ENCODE measurements at regions of chr3 and their contacts with region 1.

Region 1: GRCh38 chr3:10322352-10322710 is 1.4 kb upstream of the SEC13 start:
- DNase-seq: peak; percentile 29
- H3K4me3 Mint-ChIP-seq: no peak overlapping the region
- H3K27ac Mint-ChIP-seq: no peak overlapping the region
- H3K4me1 Mint-ChIP-seq: peaks cover 23% of the 10 kb centered on the region
- H3K27me3 Mint-ChIP-seq: peaks cover 1% of the 10 kb centered on the region

Region 2: GRCh38 chr3:9749645-9750555 is 572.4 kb before region 1 on chr3 and contains the start of gene OGG1:
- CTCF ChIA-PET with region 1: interaction called, 3 read pairs
- intact Hi-C with region 1: loop called (anchors 1 kb)
- DNase-seq: peak; percentile 98
- H3K4me3 Mint-ChIP-seq: peak within 1 kb of the TSS; percentile 97
- H3K27ac Mint-ChIP-seq: peak within 1 kb of the TSS; percentile 94
- H3K4me1 Mint-ChIP-seq: peaks cover 50% of the 10 kb centered on the region
- H3K27me3 Mint-ChIP-seq: no peaks in the 10 kb centered on the region
- total RNA-seq, gene OGG1: 26.1 to 28.5 TPM

Region 3: GRCh38 chr3:9843715-9844438 is 478.5 kb before region 1 on chr3 and contains the start of gene RPUSD3:
- CTCF ChIA-PET with region 1: no interaction called
- intact Hi-C with region 1: loop called (anchors 5 kb)
- DNase-seq: peak; percentile 98
- H3K4me3 Mint-ChIP-seq: peak within 1 kb of the TSS; percentile 98
- H3K27ac Mint-ChIP-seq: peak within 1 kb of the TSS; percentile 89
- H3K4me1 Mint-ChIP-seq: peaks cover 30% of the 10 kb centered on the region
- H3K27me3 Mint-ChIP-seq: no peaks in the 10 kb centered on the region
- total RNA-seq, gene RPUSD3: 82.0 to 83.7 TPM

Region 4: GRCh38 chr3:9951962-9952805 is 370.1 kb before region 1 on chr3 and contains the start of gene PRRT3:
- CTCF ChIA-PET with region 1: no interaction called
- intact Hi-C with region 1: loop called (anchors 2 kb)
- DNase-seq: peak; percentile 77
- H3K4me3 Mint-ChIP-seq: peak within 1 kb of the TSS; percentile 81
- H3K27ac Mint-ChIP-seq: peak within 1 kb of the TSS; percentile 86
- H3K4me1 Mint-ChIP-seq: peaks cover 16% of the 10 kb centered on the region
- H3K27me3 Mint-ChIP-seq: no peaks in the 10 kb centered on the region
- total RNA-seq, gene PRRT3: 5.8 to 6.7 TPM

Region 5: DNA sequence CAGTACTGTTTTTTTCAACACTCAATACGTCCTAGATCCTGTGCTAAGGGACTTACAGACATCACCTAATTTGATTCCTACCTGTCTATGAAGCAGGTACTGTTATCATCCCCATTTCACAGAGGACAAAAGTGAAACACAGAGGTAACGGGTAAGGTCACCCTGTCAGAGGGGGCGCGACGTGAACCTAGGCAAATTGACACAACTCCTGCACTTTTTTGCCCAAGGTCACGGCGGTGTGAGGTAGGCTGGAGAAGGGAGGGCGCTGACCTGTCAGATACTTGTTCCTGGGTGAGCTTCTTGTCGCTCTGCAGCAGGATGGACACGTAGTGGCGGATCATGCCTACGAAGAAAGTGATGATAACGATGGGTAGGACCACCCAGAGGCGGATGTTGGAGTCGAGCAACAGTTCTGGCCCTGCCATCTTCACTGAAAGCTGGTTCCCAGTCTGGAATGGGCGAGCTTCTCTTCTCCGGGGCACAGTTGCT is 336.1 kb before region 1 on chr3:
- CTCF ChIA-PET with region 1: interaction called, 5 read pairs
- intact Hi-C with region 1: loop called (anchors 5 kb)
- DNase-seq: no peak
- H3K4me3 Mint-ChIP-seq: peak overlapping the region; percentile 97
- H3K27ac Mint-ChIP-seq: peak overlapping the region; percentile 99
- H3K4me1 Mint-ChIP-seq: peaks cover 39% of the 10 kb centered on the region
- H3K27me3 Mint-ChIP-seq: no peaks in the 10 kb centered on the region

Region 6: GRCh38 chr3:10142707-10143566 is 179.4 kb before region 1 on chr3:
- CTCF ChIA-PET with region 1: no interaction called
- intact Hi-C with region 1: loop called (anchors 1 kb)
- DNase-seq: peak; percentile 48
- H3K4me3 Mint-ChIP-seq: peak overlapping the region; percentile 84
- H3K27ac Mint-ChIP-seq: peak overlapping the region; percentile 87
- H3K4me1 Mint-ChIP-seq: peaks cover 32% of the 10 kb centered on the region
- H3K27me3 Mint-ChIP-seq: no peaks in the 10 kb centered on the region

Measured in activated naive CD4-positive, alpha-beta T cell treated with anti-CD3 and anti-CD28 coated beads for 36 hours (primary cell).